PC-3 (cell line): ENCODE measurements at regions of chr11 and their contacts with region 1.

Region 1: GRCh38 chr11:71086675-71087258 is 165.6 kb downstream of the SHANK2 start:
- DNase-seq: peak; percentile 63
- ATAC-seq: peak; percentile 81
- H3K4me3 ChIP-seq: no peak overlapping the region
- H3K27ac ChIP-seq: no peak overlapping the region
- H3K4me1 ChIP-seq: no peaks in the 10 kb centered on the region
- H3K27me3 ChIP-seq: no peaks in the 10 kb centered on the region
- CTCF ChIP-seq: peak; percentile 87

Region 2: GRCh38 chr11:71293961-71294782 is 207.4 kb after region 1 on chr11:
- CTCF ChIA-PET with region 1: no interaction called
- POLR2A ChIA-PET with region 1: no interaction called
- intact Hi-C with region 1: no loop called
- DNase-seq: no peak
- ATAC-seq: no peak
- H3K4me3 ChIP-seq: no peak overlapping the region
- H3K27ac ChIP-seq: no peak overlapping the region
- H3K4me1 ChIP-seq: peaks cover 17% of the 10 kb centered on the region
- H3K27me3 ChIP-seq: no peaks in the 10 kb centered on the region
- CTCF ChIP-seq: no peak

Region 3: GRCh38 chr11:71342951-71343827 is 256.4 kb after region 1 on chr11:
- CTCF ChIA-PET with region 1: interaction called, 3 read pairs
- POLR2A ChIA-PET with region 1: no interaction called
- intact Hi-C with region 1: loop called (anchors 2 kb)
- DNase-seq: peak; percentile 75
- ATAC-seq: peak; percentile 69
- H3K4me3 ChIP-seq: no peak overlapping the region
- H3K27ac ChIP-seq: no peak overlapping the region
- H3K4me1 ChIP-seq: peaks cover 4% of the 10 kb centered on the region; the same call in 1 of the 2 replicates
- H3K27me3 ChIP-seq: peaks cover 15% of the 10 kb centered on the region
- CTCF ChIP-seq: peak; percentile 86

Region 4: DNA sequence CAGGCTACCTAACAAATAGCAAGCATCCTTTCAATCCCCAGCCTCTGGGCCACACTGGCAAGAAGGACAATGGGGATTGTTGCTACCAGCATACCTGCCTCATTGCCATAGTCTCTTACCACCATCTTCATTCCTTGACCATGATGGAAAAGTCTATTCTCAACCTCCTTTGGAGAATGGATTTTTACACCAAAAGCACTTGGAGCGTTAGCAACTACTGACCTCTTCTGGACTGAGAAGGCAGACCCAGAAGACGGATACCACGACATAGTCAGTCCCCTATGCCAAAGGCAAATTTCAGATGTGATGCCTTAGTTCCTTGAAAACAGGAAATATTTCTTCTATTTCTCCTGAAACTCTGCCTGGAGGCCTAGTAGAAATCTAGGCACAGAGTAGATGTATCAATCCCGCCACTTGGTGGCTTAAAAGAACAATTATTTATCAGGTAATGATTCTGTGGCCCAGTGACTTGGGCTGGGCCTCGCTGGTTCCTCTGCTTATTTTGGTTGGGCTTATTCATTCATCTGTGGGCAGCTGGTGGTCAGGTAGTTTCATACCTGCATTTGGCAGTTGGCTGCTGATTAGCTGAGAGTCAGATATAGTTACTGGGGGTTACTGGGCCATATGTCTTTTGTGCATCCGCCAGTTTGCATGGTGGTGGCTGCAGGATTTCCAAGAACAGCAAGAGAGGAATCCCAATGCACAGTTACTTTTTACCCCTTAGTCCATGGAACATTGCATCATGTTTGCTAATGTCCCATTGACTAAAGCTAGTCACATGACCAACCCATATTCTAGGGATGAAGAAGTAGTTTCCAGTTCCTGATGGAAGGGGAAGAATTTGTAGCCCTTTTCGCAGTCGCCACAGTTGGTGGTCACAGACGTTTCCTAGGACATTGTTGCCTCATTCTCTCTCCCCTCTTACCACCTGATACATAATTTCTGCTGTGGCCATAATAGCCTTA is 286.2 kb after region 1 on chr11:
- CTCF ChIA-PET with region 1: interaction called, 3 read pairs
- POLR2A ChIA-PET with region 1: no interaction called
- intact Hi-C with region 1: loop called (anchors 2 kb)
- DNase-seq: peak; percentile 61
- ATAC-seq: peak; percentile 66
- H3K4me3 ChIP-seq: no peak overlapping the region
- H3K27ac ChIP-seq: no peak overlapping the region
- H3K4me1 ChIP-seq: no peaks in the 10 kb centered on the region
- H3K27me3 ChIP-seq: peaks cover 19% of the 10 kb centered on the region; the same call in 1 of the 2 replicates
- CTCF ChIP-seq: peak; percentile 67